ENCODE measurements at regions of chr2 and their contacts with region 1.

Region 1: GRCh38 chr2:11505652-11506610 is 27.9 kb upstream of the GREB1 start:
- DNase-seq: peak; percentile 97
- ATAC-seq: peak; percentile 91
- H3K4me3 ChIP-seq: peak overlapping the region; percentile 3 to 51 (median 4); a peak in 2 of 6 replicates
- H3K27ac ChIP-seq: peak overlapping the region; percentile 97
- H3K4me1 ChIP-seq: peaks cover 98% of the 10 kb centered on the region
- H3K27me3 ChIP-seq: no peaks in the 10 kb centered on the region
- CTCF ChIP-seq: no peak
- EP300 ChIP-seq: peak; percentile 53 to 89; a peak in 3 of 4 replicates
- POLR2A ChIP-seq: peak; percentile 57 to 62
- RAD21 ChIP-seq: peak; percentile 32; the same call in 1 of the 2 replicates

Region 2: DNA sequence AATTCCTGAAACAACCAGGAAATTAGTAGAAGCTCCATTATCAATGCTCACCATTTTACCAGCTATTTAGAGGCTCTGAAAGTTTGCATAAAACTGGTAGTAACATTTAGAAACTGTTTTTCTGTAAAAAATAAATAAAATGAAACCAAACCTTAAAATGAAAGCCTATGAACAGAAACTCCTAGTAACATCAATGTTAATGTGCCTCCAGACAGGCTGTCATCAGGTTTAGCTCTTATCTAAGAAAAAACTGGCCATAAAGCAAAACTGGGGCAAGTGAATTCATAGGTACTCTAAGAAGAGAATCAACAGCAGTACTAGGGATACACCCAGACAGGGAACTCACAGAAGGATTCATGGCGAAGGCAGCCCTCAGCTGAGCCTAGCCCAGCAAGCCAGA is 48.0 kb before region 1 on chr2:
- CTCF ChIA-PET with region 1: no interaction called
- POLR2A ChIA-PET with region 1: no interaction called
- in situ Hi-C with region 1: no loop called
- intact Hi-C with region 1: no loop called
- DNase-seq: no peak
- ATAC-seq: no peak
- H3K4me3 ChIP-seq: no peak overlapping the region
- H3K27ac ChIP-seq: no peak overlapping the region
- H3K4me1 ChIP-seq: peaks cover 56% of the 10 kb centered on the region
- H3K27me3 ChIP-seq: no peaks in the 10 kb centered on the region
- CTCF ChIP-seq: no peak
- EP300 ChIP-seq: no peak
- POLR2A ChIP-seq: no peak
- RAD21 ChIP-seq: no peak

Region 3: DNA sequence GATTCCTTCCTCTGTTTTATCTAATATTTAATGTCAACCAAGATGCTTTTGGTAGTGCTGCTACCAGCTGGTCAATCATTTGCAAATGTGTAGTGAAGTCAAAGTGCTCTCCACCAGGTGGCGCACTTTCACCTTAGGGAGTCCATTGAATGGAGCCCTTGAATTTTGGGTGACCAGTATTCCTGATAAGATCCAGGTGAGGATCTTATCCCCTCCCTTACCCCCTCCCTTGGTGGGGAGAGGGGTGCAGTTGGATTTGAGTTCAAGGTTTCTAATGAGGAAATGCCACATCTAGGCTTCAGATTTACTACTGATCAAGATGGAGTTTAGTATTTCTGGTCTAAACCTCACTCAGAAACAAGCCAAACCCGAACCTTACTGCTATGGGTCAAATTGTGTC is 27.9 kb before region 1 on chr2:
- CTCF ChIA-PET with region 1: no interaction called
- POLR2A ChIA-PET with region 1: interaction called, 102 read pairs
- in situ Hi-C with region 1: no loop called
- intact Hi-C with region 1: loop called (anchors 1 kb)
- DNase-seq: peak; percentile 90
- ATAC-seq: peak; percentile 66
- H3K4me3 ChIP-seq: no peak overlapping the region
- H3K27ac ChIP-seq: no peak overlapping the region
- H3K4me1 ChIP-seq: peaks cover 52% of the 10 kb centered on the region
- H3K27me3 ChIP-seq: no peaks in the 10 kb centered on the region
- CTCF ChIP-seq: peak; percentile 95
- EP300 ChIP-seq: peak in 1 of 2 experiments; percentile 17; a peak in 1 of 4 replicates
- POLR2A ChIP-seq: no peak
- RAD21 ChIP-seq: peak; percentile 97

Region 4: GRCh38 chr2:11492720-11493119 is 13.2 kb before region 1 on chr2:
- CTCF ChIA-PET with region 1: no interaction called
- POLR2A ChIA-PET with region 1: interaction called, 102 read pairs
- in situ Hi-C with region 1: no loop called
- intact Hi-C with region 1: no loop called
- DNase-seq: no peak
- ATAC-seq: peak; percentile 31
- H3K4me3 ChIP-seq: no peak overlapping the region
- H3K27ac ChIP-seq: peak overlapping the region; percentile 23
- H3K4me1 ChIP-seq: peaks cover 94% of the 10 kb centered on the region
- H3K27me3 ChIP-seq: no peaks in the 10 kb centered on the region
- CTCF ChIP-seq: no peak
- EP300 ChIP-seq: no peak
- POLR2A ChIP-seq: no peak
- RAD21 ChIP-seq: no peak

Measured in HepG2 (cell line).